Calu3 (cell line): ENCODE measurements at regions of chr12 and their contacts with region 1.

Region 1: GRCh38 chr12:13278249-13278787 is 81.8 kb downstream of the EMP1 start:
- DNase-seq: peak; percentile 84
- H3K4me3 Mint-ChIP-seq: no peak overlapping the region
- H3K27ac Mint-ChIP-seq: no peak overlapping the region
- H3K4me1 Mint-ChIP-seq: no peaks in the 10 kb centered on the region
- H3K27me3 Mint-ChIP-seq: peaks cover 30% of the 10 kb centered on the region
- CTCF ChIP-seq: peak; percentile 93

Region 2: DNA sequence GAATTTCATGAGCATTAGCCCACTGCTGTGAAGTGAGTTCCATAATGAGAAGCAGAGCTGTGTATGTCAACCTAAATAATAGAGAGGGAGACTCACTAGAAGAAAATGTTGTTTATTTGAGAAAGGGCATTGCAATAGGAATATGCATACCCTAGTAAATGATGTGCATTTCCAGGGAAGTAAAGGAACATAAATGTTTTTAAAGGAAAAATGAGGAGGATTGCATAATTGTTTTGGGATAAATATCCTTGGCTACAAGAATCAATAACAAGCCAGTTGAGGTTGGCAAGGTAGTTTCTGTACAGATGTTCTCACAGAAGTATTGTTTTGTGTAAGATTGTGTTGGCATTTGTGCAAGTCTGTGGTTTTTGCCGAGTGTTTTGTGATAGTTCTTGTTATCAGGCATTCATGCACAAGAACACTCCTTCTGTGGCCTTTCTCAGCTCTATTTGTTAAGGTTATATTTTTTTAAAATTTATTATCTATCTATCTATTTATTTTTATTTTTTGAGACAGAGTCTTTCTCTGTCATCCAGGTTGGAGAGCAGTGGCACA is 34.7 kb before region 1 on chr12:
- CTCF ChIA-PET with region 1: no interaction called
- intact Hi-C with region 1: no loop called
- DNase-seq: no peak
- H3K4me3 Mint-ChIP-seq: no peak overlapping the region
- H3K27ac Mint-ChIP-seq: no peak overlapping the region
- H3K4me1 Mint-ChIP-seq: peaks cover 35% of the 10 kb centered on the region
- H3K27me3 Mint-ChIP-seq: no peaks in the 10 kb centered on the region
- CTCF ChIP-seq: no peak

Region 3: GRCh38 chr12:13534645-13535398 is 256.5 kb after region 1 on chr12:
- CTCF ChIA-PET with region 1: interaction called, 11 read pairs
- intact Hi-C with region 1: loop called (anchors 2 kb)
- DNase-seq: peak; percentile 83
- H3K4me3 Mint-ChIP-seq: no peak overlapping the region
- H3K27ac Mint-ChIP-seq: no peak overlapping the region
- H3K4me1 Mint-ChIP-seq: peaks cover 8% of the 10 kb centered on the region
- H3K27me3 Mint-ChIP-seq: no peaks in the 10 kb centered on the region
- CTCF ChIP-seq: peak; percentile 88

Region 4: GRCh38 chr12:13661005-13661887 is 382.9 kb after region 1 on chr12:
- CTCF ChIA-PET with region 1: interaction called, 11 read pairs
- intact Hi-C with region 1: loop called (anchors 1 kb)
- DNase-seq: peak; percentile 62
- H3K4me3 Mint-ChIP-seq: no peak overlapping the region
- H3K27ac Mint-ChIP-seq: no peak overlapping the region
- H3K4me1 Mint-ChIP-seq: peaks cover 16% of the 10 kb centered on the region
- H3K27me3 Mint-ChIP-seq: no peaks in the 10 kb centered on the region
- CTCF ChIP-seq: peak; percentile 85

Region 5: DNA sequence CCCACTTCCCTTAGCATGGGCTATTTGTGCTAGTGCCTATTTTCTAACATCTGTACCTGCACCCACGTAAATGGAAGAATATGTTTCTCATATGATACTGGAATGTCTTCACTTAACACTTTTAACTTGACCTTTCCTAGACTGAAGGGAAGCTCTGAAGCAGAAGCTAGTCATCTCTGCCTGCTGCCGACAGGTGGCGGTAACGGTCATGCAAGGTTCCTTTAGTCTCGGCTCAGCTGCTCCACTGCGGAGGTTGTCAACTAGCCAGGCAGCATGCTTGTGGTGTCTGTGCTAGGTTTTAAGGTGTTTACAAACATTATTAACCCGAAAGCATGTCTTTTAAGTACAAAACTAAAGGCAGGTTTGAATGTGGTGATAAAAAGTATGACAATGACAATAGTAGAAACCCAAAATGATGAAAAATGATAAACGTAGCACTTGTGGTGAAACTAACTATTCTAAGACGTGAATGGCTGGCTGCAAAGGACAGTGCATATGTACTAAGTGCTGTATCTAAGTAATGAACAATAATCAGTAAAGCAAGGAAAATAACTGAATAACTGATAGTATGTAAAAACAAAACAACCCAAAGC is 585.9 kb after region 1 on chr12:
- CTCF ChIA-PET with region 1: no interaction called
- intact Hi-C with region 1: loop called (anchors 5 kb)
- DNase-seq: peak; percentile 77
- H3K4me3 Mint-ChIP-seq: no peak overlapping the region
- H3K27ac Mint-ChIP-seq: no peak overlapping the region
- H3K4me1 Mint-ChIP-seq: no peaks in the 10 kb centered on the region
- H3K27me3 Mint-ChIP-seq: peaks cover 84% of the 10 kb centered on the region
- CTCF ChIP-seq: peak; percentile 81